ENCODE measurements at regions of chr2 and their contacts with region 1.

Region 1: DNA sequence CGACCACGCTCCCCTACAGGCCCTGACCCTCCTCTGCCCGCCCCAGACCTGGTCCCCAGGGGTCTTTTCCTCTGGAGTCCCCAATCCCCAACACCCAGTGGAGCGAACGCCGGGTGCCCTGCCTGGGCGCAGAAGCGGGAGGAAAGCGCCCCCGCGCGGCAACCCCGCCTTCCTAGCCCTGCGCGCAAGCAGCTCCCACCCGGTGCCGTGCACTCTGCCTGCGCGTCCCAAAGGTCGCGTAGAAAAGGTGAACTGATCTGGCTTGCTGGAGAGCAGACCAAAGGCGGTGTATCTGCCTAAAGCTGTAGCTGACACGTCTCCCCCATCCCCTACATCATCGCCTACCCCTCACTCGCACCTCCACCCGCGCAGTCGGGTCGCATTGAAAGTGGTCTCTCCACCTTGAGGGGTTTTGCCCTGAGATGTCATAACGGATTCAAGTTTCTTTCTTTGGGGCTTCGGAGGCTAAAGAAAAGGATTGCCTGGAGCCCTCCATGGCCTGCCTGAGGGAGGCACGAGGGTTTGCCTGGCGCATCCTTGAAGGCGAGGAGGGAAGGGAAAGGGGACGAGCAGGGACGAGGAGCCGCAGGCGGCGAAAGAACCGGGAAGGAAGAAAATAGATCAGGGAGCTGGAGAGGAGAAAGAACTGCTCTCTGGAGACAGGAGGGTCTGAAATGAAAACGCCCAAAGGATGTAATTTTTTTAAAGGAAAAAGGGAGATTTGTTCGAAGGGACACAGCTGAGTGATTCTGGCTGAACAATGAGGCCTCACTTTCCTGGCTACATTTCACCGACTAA is 5.8 kb downstream of the GAD1 start:
- DNase-seq: peak; percentile 79
- H3K4me3 ChIP-seq: peak overlapping the region; percentile 31 to 38
- H3K27ac ChIP-seq: no peak overlapping the region
- H3K4me1 ChIP-seq: peaks cover 0 to 31% of the 10 kb centered on the region in 2 experiments; a peak in 1 of 4 replicates
- H3K27me3 ChIP-seq: peaks cover 89% of the 10 kb centered on the region
- CTCF ChIP-seq: peak; percentile 55
- EP300 ChIP-seq: no peak
- RAD21 ChIP-seq: no peak

Region 2: DNA sequence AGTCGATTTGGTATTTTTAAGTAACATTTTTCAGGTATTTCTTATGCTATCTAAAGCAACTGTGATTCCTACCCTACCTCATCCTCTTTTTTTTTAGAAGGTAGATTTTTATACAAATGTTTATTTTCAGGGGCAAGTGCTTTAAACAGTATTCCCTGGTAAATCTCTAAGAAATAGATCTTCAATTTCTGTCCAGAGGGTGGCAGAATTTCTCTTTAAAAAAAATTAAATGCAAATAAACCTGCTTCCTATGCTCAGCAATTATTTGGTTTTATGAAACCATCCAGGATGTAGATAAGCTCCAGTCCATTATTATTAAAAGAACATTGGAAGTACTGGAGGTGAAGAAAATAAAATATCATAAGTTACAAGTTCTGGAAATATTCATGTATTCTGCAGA is 452.6 kb before region 1 on chr2:
- CTCF ChIA-PET with region 1: interaction called, 94 read pairs
- POLR2A ChIA-PET with region 1: no interaction called
- DNase-seq: peak; percentile 11
- H3K4me3 ChIP-seq: no peak overlapping the region
- H3K27ac ChIP-seq: no peak overlapping the region
- H3K4me1 ChIP-seq: no peaks in the 10 kb centered on the region
- H3K27me3 ChIP-seq: peaks cover 15% of the 10 kb centered on the region; the same call in 1 of the 2 replicates
- CTCF ChIP-seq: peak; percentile 58
- EP300 ChIP-seq: no peak
- RAD21 ChIP-seq: peak; percentile 52; the same call in 1 of the 2 replicates

Region 3: DNA sequence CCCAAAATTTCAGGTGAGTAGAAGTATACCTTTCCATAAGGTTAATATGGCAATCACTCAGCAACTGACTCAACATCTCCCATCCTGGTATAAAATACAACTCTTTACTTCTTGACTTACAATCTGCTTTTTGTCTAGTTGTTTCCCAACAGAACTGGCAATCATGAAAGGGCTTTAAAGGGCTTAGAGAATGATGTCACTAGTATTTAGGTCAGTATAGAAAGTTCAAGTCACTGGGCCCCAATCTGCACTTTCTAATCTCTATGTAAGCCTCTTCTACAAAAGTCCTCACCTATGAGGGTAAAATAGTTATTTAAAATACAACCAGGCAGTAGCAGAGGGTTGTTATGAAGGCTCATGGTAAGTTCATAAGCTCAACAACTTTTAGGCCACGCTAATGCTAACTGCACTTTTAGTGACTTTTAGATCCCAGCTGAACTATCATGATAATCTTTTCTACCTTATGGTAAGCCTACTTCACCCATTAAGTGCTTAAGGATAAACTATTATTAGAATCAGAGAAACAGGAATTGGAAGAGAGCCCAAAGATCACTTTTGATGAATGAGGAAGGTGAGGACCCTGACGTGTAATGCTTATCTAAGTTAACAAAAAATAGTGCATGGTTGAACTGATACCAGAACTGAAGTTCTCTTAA is 186.2 kb after region 1 on chr2:
- CTCF ChIA-PET with region 1: no interaction called
- POLR2A ChIA-PET with region 1: no interaction called
- DNase-seq: no peak
- H3K4me3 ChIP-seq: no peak overlapping the region
- H3K27ac ChIP-seq: no peak overlapping the region
- H3K4me1 ChIP-seq: no peaks in the 10 kb centered on the region
- H3K27me3 ChIP-seq: no peaks in the 10 kb centered on the region
- CTCF ChIP-seq: no peak
- EP300 ChIP-seq: no peak
- RAD21 ChIP-seq: no peak

Measured in SK-N-SH (cell line).